Mammary epithelial cell (primary cell): ENCODE measurements at regions of chr13 and their contacts with region 1.

Region 1: GRCh38 chr13:37074703-37075102 is 15.2 kb upstream of the SUPT20H start:
- DNase-seq: peak; percentile 10
- H3K4me3 ChIP-seq: no peak overlapping the region
- H3K27ac ChIP-seq: no peak overlapping the region
- H3K4me1 ChIP-seq: no peaks in the 10 kb centered on the region
- H3K27me3 ChIP-seq: no peaks in the 10 kb centered on the region
- CTCF ChIP-seq: peak; percentile 24 to 36

Region 2: DNA sequence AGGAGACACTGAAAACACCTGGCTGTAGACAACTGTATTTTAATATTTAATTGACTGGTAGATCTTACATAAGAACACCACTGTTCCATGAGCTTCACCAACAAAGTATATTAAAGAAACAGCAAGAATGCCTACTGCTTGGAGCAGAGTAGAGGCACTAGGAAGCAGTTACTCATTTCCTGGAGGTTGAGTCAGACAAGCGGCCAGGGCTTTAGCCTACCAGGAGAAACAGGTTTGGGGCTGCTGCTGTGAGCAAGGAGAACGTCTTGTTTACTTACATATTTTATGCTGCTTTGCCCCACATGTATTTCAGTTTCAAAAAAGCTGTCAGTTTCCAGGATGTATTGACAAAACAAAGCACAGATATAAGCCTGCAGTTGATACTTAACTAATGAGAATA is 108.9 kb before region 1 on chr13:
- CTCF ChIA-PET with region 1: no interaction called
- dilution Hi-C with region 1: no loop called
- in situ Hi-C with region 1: no loop called
- intact Hi-C with region 1: no loop called
- DNase-seq: peak; percentile 88
- H3K4me3 ChIP-seq: peak overlapping the region in 1 of 3 experiments; percentile 4
- H3K27ac ChIP-seq: peak overlapping the region; percentile 69
- H3K4me1 ChIP-seq: peaks cover 18% of the 10 kb centered on the region
- H3K27me3 ChIP-seq: no peaks in the 10 kb centered on the region
- CTCF ChIP-seq: no peak

Region 3: DNA sequence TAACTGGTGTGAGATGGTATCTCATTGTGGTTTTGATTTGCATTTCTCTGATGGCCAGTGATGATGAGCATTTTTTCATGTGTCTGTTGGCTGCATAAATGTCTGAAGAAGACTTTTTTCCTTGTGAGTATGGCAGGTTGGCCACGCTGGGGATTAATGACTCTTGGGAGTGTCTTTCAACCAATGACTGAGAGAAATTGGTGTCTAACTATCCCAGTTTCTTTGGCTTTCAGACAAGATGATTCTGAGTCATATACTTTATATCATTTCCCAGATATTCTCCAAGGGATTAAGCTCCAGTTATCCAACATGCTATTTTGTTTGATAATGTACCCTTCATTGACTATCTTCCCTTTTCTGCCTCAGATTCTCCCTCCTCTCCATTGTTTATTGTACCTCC is 66.3 kb after region 1 on chr13:
- CTCF ChIA-PET with region 1: no interaction called
- dilution Hi-C with region 1: no loop called
- in situ Hi-C with region 1: no loop called
- intact Hi-C with region 1: loop called (anchors 2 kb)
- DNase-seq: no peak
- H3K4me3 ChIP-seq: no peak overlapping the region
- H3K27ac ChIP-seq: no peak overlapping the region
- H3K4me1 ChIP-seq: no peaks in the 10 kb centered on the region
- H3K27me3 ChIP-seq: no peaks in the 10 kb centered on the region
- CTCF ChIP-seq: no peak

Region 4: GRCh38 chr13:37602747-37603381 is 528.2 kb after region 1 on chr13:
- CTCF ChIA-PET with region 1: no interaction called
- dilution Hi-C with region 1: no loop called
- in situ Hi-C with region 1: no loop called
- intact Hi-C with region 1: loop called (anchors 2 kb)
- DNase-seq: no peak
- H3K4me3 ChIP-seq: no peak overlapping the region
- H3K27ac ChIP-seq: no peak overlapping the region
- H3K4me1 ChIP-seq: peaks cover 3% of the 10 kb centered on the region
- H3K27me3 ChIP-seq: no peaks in the 10 kb centered on the region
- CTCF ChIP-seq: peak; percentile 32 to 63

Region 5: GRCh38 chr13:38045307-38046048 is 970.8 kb after region 1 on chr13:
- CTCF ChIA-PET with region 1: no interaction called
- dilution Hi-C with region 1: no loop called
- in situ Hi-C with region 1: loop called in 1 of 2 experiments (anchors 25 kb)
- intact Hi-C with region 1: no loop called
- DNase-seq: peak; percentile 27
- H3K4me3 ChIP-seq: no peak overlapping the region
- H3K27ac ChIP-seq: no peak overlapping the region
- H3K4me1 ChIP-seq: no peaks in the 10 kb centered on the region
- H3K27me3 ChIP-seq: no peaks in the 10 kb centered on the region
- CTCF ChIP-seq: peak; percentile 56 to 71